Posterior cingulate gyrus (tissue), 11 donors: ENCODE measurements at regions of chr3 and their contacts with region 1.

Region 1: GRCh38 chr3:15098503-15099363 is at the start of gene RBSN:
- DNase-seq: peak; percentile 95 to 100 (median 96)

Region 2: GRCh38 chr3:14651440-14652251 is 447.1 kb before region 1 on chr3 and contains the start of gene CCDC174:
- intact Hi-C with region 1: loop called (anchors 5 kb)
- DNase-seq: peak; percentile 86 to 99 (median 93)

Region 3: GRCh38 chr3:14947886-14948555 is 150.7 kb before region 1 on chr3:
- intact Hi-C with region 1: loop called (anchors 5 kb)
- DNase-seq: peak; percentile 97 to 100 (median 99)

Region 4: DNA sequence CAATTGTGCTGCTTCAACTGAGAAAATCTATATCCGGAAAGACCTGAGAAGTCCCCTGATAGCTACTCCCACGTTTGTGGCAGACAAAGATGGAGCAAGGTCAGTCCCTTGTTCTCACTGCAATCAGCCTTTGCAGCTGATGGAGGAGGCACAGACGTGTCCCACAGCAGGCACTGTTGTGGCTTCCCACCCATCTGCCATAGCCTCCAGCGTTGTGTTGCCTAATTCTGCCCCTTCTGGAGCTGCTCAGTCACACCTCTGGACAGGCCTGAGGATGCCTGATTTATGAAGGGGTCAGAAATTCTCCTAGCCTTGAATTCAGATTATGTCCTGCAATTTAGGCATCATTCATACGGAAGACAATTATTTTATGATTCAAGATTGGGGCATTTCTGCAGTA is 75.5 kb before region 1 on chr3:
- intact Hi-C with region 1: no loop called
- DNase-seq: no peak

Region 5: GRCh38 chr3:15064835-15065549 is 33.7 kb before region 1 on chr3 and contains the start of gene MRPS25:
- intact Hi-C with region 1: loop called (anchors 1 kb)
- DNase-seq: peak; percentile 81 to 98 (median 88)